ENCODE measurements at regions of chr4 and their contacts with region 1.

Region 1: DNA sequence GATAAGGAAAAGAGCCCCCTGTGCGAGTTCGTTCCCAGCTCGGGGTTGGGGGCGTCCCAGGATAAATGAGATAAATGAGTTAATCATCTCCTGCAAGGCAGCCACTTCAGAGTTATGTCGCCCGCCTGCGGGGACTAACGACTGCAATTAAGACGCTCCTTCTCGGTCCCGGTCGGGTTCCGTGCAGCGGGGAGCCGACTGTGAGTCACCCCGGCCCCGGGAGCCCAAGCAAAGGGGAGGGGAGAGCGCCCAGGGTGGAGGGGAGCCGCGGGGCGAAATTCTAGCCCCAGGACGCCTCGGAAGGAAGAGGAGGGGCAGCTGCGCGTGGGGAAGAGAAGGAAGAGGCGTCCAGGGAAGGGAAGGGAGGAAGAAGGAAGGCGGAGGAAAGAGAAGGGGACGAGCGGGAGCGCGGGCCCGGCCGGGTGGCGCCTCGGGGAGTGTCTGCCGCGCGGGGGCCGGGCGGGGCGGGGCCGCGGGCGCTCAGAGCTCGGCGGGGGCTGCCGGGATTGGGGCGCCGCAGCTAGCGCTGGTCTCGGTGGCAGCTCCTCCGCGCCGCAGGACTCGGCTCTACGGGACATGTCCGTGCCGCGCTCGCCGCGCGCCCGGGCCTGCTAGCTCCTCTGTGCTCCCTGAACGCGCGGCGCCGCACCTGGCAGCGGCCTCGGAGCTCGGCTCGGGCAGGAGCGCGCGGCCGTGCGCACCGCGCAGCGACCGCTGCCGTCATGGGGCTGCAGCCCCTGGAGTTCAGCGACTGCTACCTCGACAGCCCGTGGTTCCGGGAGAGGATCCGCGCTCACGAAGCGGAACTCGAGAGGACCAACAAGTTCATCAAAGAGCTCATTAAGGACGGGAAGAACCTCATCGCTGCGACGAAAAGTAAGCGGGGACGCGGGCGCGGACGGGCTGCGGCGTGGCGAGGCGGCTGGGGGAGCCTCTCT is at the start of gene ARHGAP10:
- DNase-seq: no peak
- ATAC-seq: peak; percentile 71
- H3K4me3 ChIP-seq: peak within 1 kb of the TSS; percentile 98
- H3K27ac ChIP-seq: peak within 1 kb of the TSS; percentile 91
- H3K4me1 ChIP-seq: peaks cover 12% of the 10 kb centered on the region
- H3K27me3 ChIP-seq: no peaks in the 10 kb centered on the region
- CTCF ChIP-seq: no peak
- EP300 ChIP-seq: no peak
- POLR2A ChIP-seq: peak; percentile 78
- RAD21 ChIP-seq: no peak
- polyA plus RNA-seq, gene ARHGAP10: 1.3 to 4.5 TPM

Region 2: GRCh38 chr4:147299205-147299604 is 432.6 kb before region 1 on chr4:
- CTCF ChIA-PET with region 1: no interaction called
- POLR2A ChIA-PET with region 1: no interaction called
- RAD21 ChIA-PET with region 1: no interaction called
- SMC1A ChIA-PET with region 1: no interaction called
- in situ Hi-C with region 1: no loop called
- intact Hi-C with region 1: no loop called
- DNase-seq: no peak
- ATAC-seq: peak; percentile 20
- H3K4me3 ChIP-seq: no peak overlapping the region
- H3K27ac ChIP-seq: no peak overlapping the region
- H3K4me1 ChIP-seq: no peaks in the 10 kb centered on the region
- H3K27me3 ChIP-seq: no peaks in the 10 kb centered on the region
- CTCF ChIP-seq: no peak
- EP300 ChIP-seq: no peak
- POLR2A ChIP-seq: no peak
- RAD21 ChIP-seq: no peak

Region 3: DNA sequence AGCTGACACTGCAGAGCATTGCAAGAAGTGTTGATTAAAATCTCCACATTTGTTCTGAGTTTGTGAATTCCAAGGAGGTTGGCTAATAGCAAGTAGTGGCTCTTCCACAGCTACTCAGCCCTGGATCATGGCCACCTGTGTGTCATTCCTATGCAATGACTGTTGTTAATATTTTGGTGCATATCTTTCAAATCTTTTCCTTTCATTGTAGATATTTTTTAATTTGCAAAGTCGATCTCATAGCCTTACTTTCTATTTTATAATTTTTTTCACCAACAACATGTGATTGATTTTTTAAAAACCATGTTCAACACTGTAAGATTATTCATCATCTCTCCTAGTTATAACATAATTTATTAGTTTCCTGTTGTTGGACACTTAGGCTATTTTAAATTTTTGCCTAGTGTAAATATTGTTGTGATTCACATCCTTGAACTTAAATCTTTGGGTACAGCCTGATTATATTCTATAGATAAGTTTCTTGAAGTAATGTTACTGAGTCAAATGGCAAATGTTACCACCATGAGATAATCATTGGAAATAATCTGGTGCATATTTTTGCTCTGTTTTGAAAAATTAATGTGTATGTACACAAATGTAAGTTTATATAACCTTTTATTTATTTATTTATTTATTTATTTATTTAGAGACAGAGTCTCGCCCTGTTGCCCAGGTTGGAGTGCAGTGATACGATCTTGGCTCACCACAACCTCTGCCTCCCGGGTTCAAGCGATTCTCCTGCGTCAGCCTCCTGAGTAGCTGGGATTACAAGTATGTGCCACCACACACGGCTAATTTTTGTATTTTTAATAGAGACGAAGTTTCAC is 17.1 kb before region 1 on chr4:
- CTCF ChIA-PET with region 1: interaction called, 9 read pairs
- POLR2A ChIA-PET with region 1: interaction called, 17 read pairs
- RAD21 ChIA-PET with region 1: interaction called, 9 read pairs
- SMC1A ChIA-PET with region 1: interaction called, 19 read pairs
- in situ Hi-C with region 1: no loop called
- intact Hi-C with region 1: loop called (anchors 2 kb)
- DNase-seq: no peak
- ATAC-seq: no peak
- H3K4me3 ChIP-seq: no peak overlapping the region
- H3K27ac ChIP-seq: no peak overlapping the region
- H3K4me1 ChIP-seq: peaks cover 18% of the 10 kb centered on the region
- H3K27me3 ChIP-seq: no peaks in the 10 kb centered on the region
- CTCF ChIP-seq: no peak
- EP300 ChIP-seq: no peak
- POLR2A ChIP-seq: no peak
- RAD21 ChIP-seq: no peak

Region 4: GRCh38 chr4:147780137-147780777 is 48.4 kb after region 1 on chr4:
- CTCF ChIA-PET with region 1: interaction called, 6 read pairs
- POLR2A ChIA-PET with region 1: interaction called, 8 read pairs
- RAD21 ChIA-PET with region 1: interaction called, 7 read pairs
- SMC1A ChIA-PET with region 1: interaction called, 12 read pairs
- in situ Hi-C with region 1: no loop called
- intact Hi-C with region 1: loop called (anchors 2 kb)
- DNase-seq: peak; percentile 86
- ATAC-seq: peak; percentile 84
- H3K4me3 ChIP-seq: peak overlapping the region; percentile 67; the same call in 1 of the 2 replicates
- H3K27ac ChIP-seq: peak overlapping the region; percentile 98
- H3K4me1 ChIP-seq: peaks cover 44% of the 10 kb centered on the region
- H3K27me3 ChIP-seq: no peaks in the 10 kb centered on the region
- CTCF ChIP-seq: no peak
- EP300 ChIP-seq: peak; percentile 8 to 61; a peak in 1 of 4 replicates
- POLR2A ChIP-seq: peak; percentile 71
- RAD21 ChIP-seq: no peak

Region 5: DNA sequence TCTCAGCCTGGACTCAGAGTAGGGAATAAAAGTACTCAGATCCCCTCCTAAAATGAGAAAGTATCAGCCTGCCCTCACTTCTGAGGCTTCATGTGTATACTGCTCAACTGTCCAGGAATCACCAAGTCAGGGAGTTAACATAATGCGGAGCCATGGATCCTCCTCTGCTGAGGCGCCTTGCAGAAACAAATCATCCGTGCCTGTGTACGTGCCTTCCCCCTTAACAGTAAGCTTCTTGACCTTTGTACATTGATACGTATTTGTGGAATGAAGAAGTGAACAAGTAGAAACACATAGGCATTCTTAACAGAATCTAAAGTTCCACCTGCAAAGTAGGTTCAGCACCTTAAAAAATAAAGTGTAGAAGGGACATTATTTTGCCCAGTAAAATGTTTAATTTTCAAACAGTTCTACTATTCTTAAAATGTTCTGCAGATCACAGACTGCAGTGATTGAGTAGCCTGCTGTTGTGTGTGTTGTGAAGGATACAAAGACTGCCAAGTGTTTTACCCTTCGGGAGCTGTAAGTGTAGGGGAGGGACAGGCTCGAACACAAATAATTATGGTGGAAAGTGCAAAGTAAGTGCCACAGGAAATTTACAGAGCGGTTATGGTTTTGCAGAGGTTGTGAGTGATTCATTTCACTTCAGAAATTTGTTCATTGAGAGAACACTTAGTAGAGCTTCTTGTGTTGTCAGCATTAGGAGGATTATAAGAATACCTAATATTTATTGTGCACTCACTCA is 61.9 kb after region 1 on chr4:
- CTCF ChIA-PET with region 1: interaction called, 7 read pairs
- POLR2A ChIA-PET with region 1: interaction called, 9 read pairs
- RAD21 ChIA-PET with region 1: interaction called, 50 read pairs
- SMC1A ChIA-PET with region 1: interaction called, 15 read pairs
- in situ Hi-C with region 1: no loop called
- intact Hi-C with region 1: no loop called
- DNase-seq: no peak
- ATAC-seq: peak; percentile 65
- H3K4me3 ChIP-seq: peak overlapping the region; percentile 4; the same call in 1 of the 2 replicates
- H3K27ac ChIP-seq: peak overlapping the region; percentile 72
- H3K4me1 ChIP-seq: peaks cover 37% of the 10 kb centered on the region
- H3K27me3 ChIP-seq: no peaks in the 10 kb centered on the region
- CTCF ChIP-seq: no peak
- EP300 ChIP-seq: no peak
- POLR2A ChIP-seq: no peak
- RAD21 ChIP-seq: no peak

Region 6: DNA sequence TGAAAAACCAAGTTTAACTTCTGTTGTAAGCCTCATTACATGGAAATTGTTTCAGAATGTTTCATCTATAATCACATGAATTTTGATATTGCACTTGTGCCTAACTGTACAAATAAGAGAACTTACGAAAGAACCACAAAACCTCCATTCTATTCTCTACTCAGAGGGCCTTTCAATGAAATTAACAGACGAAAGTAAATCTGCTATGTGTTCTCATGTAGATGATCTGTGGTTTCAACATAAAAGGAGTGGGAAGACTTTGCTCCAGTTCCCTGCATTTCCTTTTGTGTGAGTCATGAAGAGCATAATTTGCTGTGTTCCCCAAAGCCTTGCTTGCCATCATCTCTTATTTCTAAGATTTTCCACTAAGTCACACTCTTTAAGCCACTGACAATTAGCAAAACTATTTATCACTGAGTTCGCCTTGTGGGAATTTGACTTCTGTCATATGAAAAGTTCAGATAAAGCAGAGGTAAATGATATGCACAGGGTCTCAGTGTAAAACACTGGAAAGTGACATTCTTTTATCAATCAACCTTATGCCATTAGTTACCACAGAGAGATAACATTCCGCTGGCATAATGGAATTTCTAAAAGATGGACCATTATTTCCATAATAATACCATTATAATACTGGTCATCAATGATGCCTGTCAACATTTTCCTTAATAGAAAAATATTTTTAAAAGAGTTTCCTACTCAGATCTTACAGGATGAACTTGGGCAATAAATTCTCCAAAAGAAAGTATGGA is 380.6 kb after region 1 on chr4:
- CTCF ChIA-PET with region 1: no interaction called
- POLR2A ChIA-PET with region 1: no interaction called
- RAD21 ChIA-PET with region 1: no interaction called
- SMC1A ChIA-PET with region 1: no interaction called
- in situ Hi-C with region 1: no loop called
- intact Hi-C with region 1: no loop called
- DNase-seq: no peak
- ATAC-seq: no peak
- H3K4me3 ChIP-seq: no peak overlapping the region
- H3K27ac ChIP-seq: no peak overlapping the region
- H3K4me1 ChIP-seq: no peaks in the 10 kb centered on the region
- H3K27me3 ChIP-seq: no peaks in the 10 kb centered on the region; a peak in 1 of 4 replicates
- CTCF ChIP-seq: no peak
- EP300 ChIP-seq: no peak
- POLR2A ChIP-seq: no peak
- RAD21 ChIP-seq: no peak

Measured in GM12878 (cell line).